ENCODE measurements at regions of chr22 and their contacts with region 1.

Region 1: DNA sequence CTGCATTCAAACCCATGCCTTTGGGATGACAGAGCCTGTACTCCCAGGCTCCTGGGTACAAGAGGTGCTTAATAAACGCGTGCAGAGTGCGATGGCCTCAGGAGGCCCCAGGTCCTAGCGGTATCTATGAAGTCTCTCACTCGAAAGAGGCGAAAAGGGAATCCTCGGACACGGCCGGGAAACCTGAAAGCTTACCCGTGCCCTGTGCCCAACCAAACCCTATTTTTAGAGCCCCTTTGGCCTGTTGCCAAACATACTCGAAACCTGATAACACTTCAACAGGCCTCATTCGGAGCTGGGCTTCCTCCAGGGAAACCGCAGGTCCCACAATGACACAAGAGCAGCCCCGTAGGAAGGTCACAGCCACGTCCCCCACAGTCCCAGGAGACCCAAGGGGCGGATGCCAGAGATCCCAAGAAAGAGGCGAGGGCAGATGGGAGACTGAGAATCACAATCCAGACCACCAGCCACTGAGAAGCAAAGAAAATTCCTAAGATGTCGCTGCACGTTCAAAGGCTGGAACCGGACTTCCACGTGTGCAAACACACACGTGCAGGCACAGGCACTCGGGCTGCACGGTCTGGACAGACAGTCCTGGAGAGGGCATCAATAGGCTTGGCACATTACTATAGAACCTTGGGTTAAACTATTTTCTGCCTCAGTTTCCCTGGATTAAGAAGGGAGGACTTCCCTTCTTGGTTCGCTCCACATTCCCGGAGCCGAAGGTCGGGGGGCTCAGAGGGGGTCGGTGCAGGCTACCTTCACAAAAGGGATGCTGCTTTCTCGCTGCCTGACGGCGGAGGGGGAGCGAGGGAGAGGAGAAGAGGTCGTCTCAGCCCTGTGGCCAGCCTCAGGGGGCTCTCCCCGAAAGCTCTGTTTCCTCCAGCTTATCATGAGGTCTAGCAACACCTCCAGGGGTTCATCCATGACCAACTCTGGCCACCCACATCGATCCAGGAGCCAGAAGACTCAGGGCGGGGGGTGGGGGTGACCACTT is 8.2 kb downstream of the PDGFB start:
- DNase-seq: peak; percentile 72
- ATAC-seq: peak; percentile 62

Region 2: GRCh38 chr22:39117585-39118191 is 118.9 kb before region 1 on chr22:
- intact Hi-C with region 1: no loop called
- DNase-seq: no peak
- ATAC-seq: no peak

Region 3: DNA sequence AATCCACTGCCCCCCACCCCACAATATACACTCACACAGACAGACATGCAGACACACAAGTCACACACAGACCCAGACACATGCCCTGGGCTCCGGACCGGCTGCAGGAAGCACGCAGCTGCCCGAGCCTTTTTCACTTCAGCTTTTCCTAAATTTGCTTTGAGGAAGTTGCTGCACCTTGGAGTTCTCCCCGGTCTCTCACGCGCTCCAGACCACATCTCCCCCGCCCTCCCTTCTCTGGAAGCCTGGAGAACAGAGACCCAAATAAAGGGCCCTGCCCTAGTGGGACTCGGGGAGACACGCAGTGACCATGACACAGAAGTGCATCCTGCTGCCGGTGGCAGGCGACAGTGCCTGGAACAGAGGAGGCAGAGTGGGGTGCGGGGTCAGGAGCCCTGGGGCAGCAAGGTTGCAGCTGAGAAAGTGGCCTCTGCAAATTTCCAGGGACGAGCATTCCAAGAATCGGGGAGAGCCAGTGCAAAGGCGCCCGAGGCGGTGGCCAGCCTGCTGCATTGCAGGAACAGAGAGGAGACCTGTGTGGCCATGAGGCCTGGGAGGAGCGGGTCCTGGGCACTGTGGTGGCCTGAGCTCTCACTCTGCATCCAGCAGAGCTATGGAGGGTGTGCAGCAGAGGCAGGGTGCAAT is 63.7 kb after region 1 on chr22:
- intact Hi-C with region 1: loop called (anchors 5 kb)
- DNase-seq: peak; percentile 66
- ATAC-seq: peak; percentile 62

Region 4: GRCh38 chr22:39309881-39310714 is 73.5 kb after region 1 on chr22:
- intact Hi-C with region 1: loop called (anchors 5 kb)
- DNase-seq: no peak
- ATAC-seq: no peak

Measured in Right ventricle myocardium superior (tissue), 1 donor.